ENCODE measurements at regions of chr1 and their contacts with region 1.

Region 1: DNA sequence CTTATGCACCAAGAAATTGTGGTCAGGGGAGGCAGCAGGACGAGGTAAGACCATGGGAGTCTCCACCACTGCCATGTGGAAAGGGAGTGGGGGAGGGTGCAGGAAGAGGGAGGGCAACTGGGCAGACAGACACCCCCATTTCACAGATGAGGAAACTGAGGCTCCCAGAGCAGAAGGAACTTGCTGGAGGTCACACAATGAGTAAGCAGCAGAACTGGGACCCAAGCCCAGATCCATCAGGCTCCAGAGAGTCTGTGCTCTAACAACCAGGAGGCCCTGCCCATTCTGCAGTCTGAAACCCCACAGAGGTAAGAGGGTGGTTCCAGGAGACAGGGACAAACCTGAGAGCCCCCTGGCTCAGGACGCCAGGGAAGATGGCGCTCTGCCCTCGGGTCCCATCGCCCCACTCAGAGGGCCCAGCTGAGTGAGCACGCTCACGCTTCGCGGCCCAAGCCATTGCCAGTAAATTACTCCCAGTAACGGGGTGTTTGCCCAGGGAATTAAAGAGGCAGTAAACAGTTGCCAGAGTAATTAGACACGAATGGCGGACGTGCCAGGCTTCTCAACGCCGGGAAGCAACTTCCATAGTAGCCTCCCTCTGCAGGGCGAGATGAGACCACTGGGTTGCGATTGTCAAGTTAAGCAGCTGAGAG is 59.2 kb downstream of the MATN1 start:
- DNase-seq: peak; percentile 70

Region 2: GRCh38 chr1:30675761-30676160 is 11.5 kb after region 1 on chr1:
- intact Hi-C with region 1: loop called in 1 of 2 experiments (anchors 1 kb)
- DNase-seq: no peak